ENCODE measurements at regions of chr9 and their contacts with region 1.

Region 1: GRCh38 chr9:99184475-99185347 is 37.0 kb downstream of the ALG2 start:
- DNase-seq: peak; percentile 93
- H3K27ac ChIP-seq: peak overlapping the region; percentile 24
- CTCF ChIP-seq: peak; percentile 99

Region 2: DNA sequence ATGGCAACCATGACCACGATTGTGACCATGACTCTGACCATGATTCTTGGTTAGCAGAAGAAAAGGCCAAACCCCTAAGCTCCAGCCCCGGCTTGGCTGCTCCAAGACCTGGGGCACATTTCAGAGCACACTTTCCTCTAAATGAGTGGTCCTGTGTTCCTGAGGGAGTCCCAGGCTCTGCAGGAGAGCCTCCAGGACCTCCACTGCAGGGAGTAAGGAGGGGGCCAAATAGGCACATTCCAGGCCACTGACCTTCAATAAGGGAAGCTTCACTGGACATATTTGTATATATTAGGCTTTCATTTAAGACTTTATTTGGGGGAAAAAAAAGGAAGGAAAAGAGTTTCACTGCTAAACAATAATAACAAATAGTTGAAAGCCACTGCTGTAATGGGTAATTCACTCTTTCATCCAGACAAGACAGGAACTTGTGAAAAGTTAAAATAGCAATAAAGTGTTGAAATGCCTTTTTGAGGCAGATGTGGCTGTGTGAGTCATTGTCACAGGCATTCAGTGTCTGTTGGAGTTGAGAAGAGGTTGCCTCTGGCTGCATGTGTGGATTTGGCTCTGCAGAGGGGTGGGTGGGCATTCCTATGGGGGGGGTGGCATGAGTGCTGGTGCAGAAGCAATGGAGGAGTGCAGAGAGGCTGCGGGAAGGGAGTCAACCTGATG is 143.7 kb before region 1 on chr9:
- CTCF ChIA-PET with region 1: no interaction called
- POLR2A ChIA-PET with region 1: no interaction called
- DNase-seq: no peak
- H3K27ac ChIP-seq: no peak overlapping the region
- CTCF ChIP-seq: no peak

Region 3: GRCh38 chr9:99162759-99163364 is 21.8 kb before region 1 on chr9:
- CTCF ChIA-PET with region 1: interaction called, 16 read pairs
- POLR2A ChIA-PET with region 1: no interaction called
- DNase-seq: peak; percentile 50
- H3K27ac ChIP-seq: no peak overlapping the region
- CTCF ChIP-seq: peak; percentile 81